Ovary (tissue), 10 donors: ENCODE measurements at regions of chr4 and their contacts with region 1.

Region 1: GRCh38 chr4:143273160-143273917 is 63.3 kb upstream of the GAB1 start:
- DNase-seq: no peak
- H3K4me3 ChIP-seq: no peak overlapping the region
- H3K27ac ChIP-seq: no peak overlapping the region
- H3K4me1 ChIP-seq: no peaks in the 10 kb centered on the region
- H3K27me3 ChIP-seq: no peaks in the 10 kb centered on the region
- CTCF ChIP-seq: no peak
- EP300 ChIP-seq: no peak
- POLR2A ChIP-seq: no peak

Region 2: GRCh38 chr4:143025081-143025704 is 248.1 kb before region 1 on chr4:
- intact Hi-C with region 1: no loop called
- DNase-seq: peak in 1 of 5 donors; percentile 27
- H3K4me3 ChIP-seq: no peak overlapping the region
- H3K27ac ChIP-seq: no peak overlapping the region
- H3K4me1 ChIP-seq: no peaks in the 10 kb centered on the region
- H3K27me3 ChIP-seq: no peaks in the 10 kb centered on the region
- CTCF ChIP-seq: peak in 1 of 3 donors; percentile 35
- EP300 ChIP-seq: no peak
- POLR2A ChIP-seq: no peak

Region 3: DNA sequence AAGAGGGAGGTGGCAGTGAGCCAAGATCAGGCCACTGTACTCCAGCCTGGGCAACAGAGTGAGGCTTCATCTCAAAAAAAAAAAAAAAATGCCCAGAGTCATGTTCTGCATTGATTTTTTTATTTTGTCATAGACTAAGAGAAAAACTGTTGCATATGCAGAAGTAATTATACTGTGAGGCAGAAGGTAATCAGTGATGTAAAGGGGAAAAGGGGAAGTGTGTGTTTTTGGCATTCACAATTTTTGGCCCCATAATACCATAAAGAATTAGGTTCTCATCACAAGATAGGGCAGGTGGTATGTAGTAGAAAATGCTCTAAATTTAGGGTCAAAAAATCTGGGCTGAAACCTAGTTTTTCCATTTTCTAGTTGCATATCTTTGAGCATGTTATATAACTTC is 16.0 kb after region 1 on chr4:
- intact Hi-C with region 1: loop called in 1 of 4 experiments (anchors 1 kb)
- DNase-seq: no peak
- H3K4me3 ChIP-seq: no peak overlapping the region
- H3K27ac ChIP-seq: no peak overlapping the region
- H3K4me1 ChIP-seq: peaks cover 8% of the 10 kb centered on the region
- H3K27me3 ChIP-seq: no peaks in the 10 kb centered on the region
- CTCF ChIP-seq: no peak
- EP300 ChIP-seq: no peak
- POLR2A ChIP-seq: no peak

Region 4: GRCh38 chr4:143538979-143539669 is 265.8 kb after region 1 on chr4:
- intact Hi-C with region 1: no loop called
- DNase-seq: no peak
- H3K4me3 ChIP-seq: no peak overlapping the region
- H3K27ac ChIP-seq: no peak overlapping the region
- H3K4me1 ChIP-seq: no peaks in the 10 kb centered on the region
- H3K27me3 ChIP-seq: no peaks in the 10 kb centered on the region
- CTCF ChIP-seq: no peak
- EP300 ChIP-seq: no peak
- POLR2A ChIP-seq: no peak

Region 5: GRCh38 chr4:143626134-143626911 is 353.0 kb after region 1 on chr4:
- intact Hi-C with region 1: no loop called
- DNase-seq: peak; percentile 60 to 84 (median 64)
- H3K4me3 ChIP-seq: no peak overlapping the region
- H3K27ac ChIP-seq: no peak overlapping the region
- H3K4me1 ChIP-seq: peaks cover 3% of the 10 kb centered on the region
- H3K27me3 ChIP-seq: no peaks in the 10 kb centered on the region
- CTCF ChIP-seq: no peak
- EP300 ChIP-seq: no peak
- POLR2A ChIP-seq: no peak